Activated CD8-positive, alpha-beta T cell treated with anti-CD3 and anti-CD28 coated beads for 36 hours (primary cell): ENCODE measurements at regions of chr10 and their contacts with region 1.

Region 1: DNA sequence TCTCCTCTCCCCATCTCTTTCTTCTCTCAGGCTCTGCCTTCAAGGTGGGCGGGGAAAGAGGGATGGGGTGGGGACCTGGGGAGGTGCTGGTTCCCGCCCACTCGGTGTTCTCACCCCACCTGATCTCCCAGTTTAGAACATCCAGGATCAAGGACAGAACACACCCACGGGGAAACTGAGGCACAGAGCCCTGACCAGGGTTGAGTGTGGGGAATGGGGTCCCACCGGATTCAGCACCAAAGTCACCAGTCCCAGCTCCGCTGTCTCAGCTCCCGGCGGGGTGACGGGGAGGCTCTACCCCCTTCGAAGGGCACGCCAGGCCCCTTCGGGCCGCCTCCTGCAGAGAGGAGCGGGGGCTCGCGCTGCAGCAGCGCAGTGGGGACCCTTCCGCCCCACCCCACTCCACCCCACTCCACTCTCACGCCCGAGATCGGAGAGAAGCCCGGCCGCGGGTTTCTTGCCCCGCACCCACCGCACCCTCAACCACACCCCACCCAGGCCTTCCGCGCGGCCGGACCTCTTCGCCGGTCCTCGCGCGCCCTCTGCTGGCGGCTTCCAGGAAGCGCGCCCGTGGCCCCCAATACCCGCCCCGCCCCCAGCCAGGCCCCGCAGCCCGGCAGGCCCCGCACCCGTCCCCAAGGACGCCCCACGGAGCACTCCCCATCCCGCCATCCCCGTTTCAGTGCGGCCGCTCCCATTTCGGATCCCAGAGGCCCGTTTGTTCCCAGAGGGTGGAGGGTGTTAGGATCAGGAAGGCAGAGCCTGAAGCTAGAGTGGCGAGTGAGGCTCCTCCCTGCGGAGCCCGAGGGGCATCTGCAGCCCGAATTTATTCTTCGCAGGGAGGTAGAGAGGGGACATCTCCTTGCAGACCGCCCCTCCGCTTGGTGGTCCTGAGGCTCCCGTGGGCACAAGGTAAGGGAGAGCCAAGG is 18.0 kb downstream of the POLL start:
- DNase-seq: peak; percentile 84
- ATAC-seq: peak; percentile 84
- H3K4me3 Mint-ChIP-seq: peak overlapping the region; percentile 72
- H3K27ac Mint-ChIP-seq: no peak overlapping the region
- H3K4me1 Mint-ChIP-seq: peaks cover 16% of the 10 kb centered on the region
- H3K27me3 Mint-ChIP-seq: peaks cover 39% of the 10 kb centered on the region
- CTCF ChIP-seq: peak; percentile 88

Region 2: DNA sequence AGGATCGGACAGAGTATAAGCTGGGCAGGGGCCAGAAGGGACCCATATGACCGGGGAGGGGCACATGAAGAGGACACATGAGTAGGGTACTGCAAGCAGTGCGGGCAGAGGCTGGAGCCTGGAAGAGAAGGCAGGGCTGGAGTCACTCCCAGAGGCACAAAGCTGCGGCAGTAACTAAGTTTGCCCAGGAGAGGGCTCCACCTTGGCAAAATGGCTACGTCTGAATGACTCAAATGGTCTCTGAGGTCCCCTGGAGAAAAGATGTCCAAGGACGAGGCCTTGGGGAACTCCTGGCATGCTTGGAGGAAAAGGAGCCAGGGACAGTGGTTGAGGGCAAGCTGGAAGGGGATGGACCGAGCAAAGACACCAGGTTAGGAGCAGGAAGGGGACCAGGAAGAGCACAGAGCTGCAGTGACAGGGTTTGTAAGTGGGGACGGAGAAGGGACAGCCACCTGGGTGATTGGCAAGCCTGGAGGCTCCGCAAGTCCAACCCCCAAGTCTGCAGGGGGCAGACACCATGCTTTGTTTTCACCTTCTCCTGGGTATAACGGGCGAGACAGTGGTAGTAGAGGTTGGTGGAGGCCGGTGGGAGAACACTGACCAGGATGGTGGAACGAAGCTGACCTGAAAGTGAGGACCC is 297.8 kb before region 1 on chr10:
- CTCF ChIA-PET with region 1: interaction called, 13 read pairs
- POLR2A ChIA-PET with region 1: no interaction called
- intact Hi-C with region 1: no loop called
- DNase-seq: peak; percentile 73
- ATAC-seq: peak; percentile 93
- H3K4me3 Mint-ChIP-seq: no peak overlapping the region
- H3K27ac Mint-ChIP-seq: no peak overlapping the region
- H3K4me1 Mint-ChIP-seq: peaks cover 2% of the 10 kb centered on the region
- H3K27me3 Mint-ChIP-seq: peaks cover 20% of the 10 kb centered on the region
- CTCF ChIP-seq: peak; percentile 80

Region 3: DNA sequence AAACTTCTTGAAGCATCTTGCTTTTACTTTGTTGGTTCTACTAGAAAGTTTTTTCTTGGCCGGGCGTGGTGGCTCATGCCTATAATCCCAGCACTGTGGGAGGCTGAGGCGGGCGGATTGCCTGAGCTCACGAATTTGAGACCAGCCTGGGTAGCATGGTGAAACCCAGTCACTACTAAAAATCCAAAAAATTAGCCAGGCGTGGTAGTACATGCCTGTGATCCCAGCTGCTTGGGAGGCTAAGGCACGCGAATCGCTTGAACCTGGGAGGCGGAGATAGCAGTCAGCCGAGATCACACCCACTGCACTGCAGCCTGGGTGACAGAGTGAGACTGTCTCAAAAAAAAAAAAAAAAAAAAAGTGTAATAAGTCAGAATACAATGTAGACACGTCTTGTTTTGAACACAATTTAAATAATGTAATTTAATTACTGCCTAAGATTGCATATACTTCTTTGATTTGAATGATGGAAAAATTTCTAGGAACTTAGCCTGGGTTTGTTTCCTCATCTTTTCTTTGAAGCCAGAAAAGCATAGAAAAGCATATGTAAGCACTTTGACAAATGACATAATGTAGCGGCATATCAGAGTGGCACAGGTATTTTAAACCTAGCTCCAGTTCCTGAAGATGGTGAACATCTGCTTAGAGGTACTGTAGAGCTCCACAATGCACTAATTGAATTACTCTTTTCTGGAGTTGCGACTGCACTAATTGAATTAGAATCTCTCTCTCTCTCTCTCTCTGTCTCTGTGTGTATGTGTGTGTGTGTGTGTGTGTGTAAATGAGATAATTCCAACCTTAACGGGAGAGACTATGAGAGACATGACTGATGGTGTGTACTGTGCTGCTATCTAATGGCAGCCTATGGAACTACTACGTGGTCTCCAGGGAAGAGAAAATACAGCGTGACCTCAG is 128.3 kb before region 1 on chr10:
- CTCF ChIA-PET with region 1: interaction called, 10 read pairs
- POLR2A ChIA-PET with region 1: no interaction called
- intact Hi-C with region 1: no loop called
- DNase-seq: peak; percentile 41
- ATAC-seq: peak; percentile 94
- H3K4me3 Mint-ChIP-seq: no peak overlapping the region
- H3K27ac Mint-ChIP-seq: no peak overlapping the region
- H3K4me1 Mint-ChIP-seq: peaks cover 3% of the 10 kb centered on the region
- H3K27me3 Mint-ChIP-seq: no peaks in the 10 kb centered on the region
- CTCF ChIP-seq: peak; percentile 75

Region 4: GRCh38 chr10:101536800-101537199 is 33.3 kb before region 1 on chr10:
- CTCF ChIA-PET with region 1: interaction called, 39 read pairs
- POLR2A ChIA-PET with region 1: no interaction called
- intact Hi-C with region 1: no loop called
- DNase-seq: no peak
- ATAC-seq: peak; percentile 66
- H3K4me3 Mint-ChIP-seq: no peak overlapping the region
- H3K27ac Mint-ChIP-seq: no peak overlapping the region
- H3K4me1 Mint-ChIP-seq: no peaks in the 10 kb centered on the region
- H3K27me3 Mint-ChIP-seq: no peaks in the 10 kb centered on the region
- CTCF ChIP-seq: peak; percentile 58

Region 5: GRCh38 chr10:101558202-101558601 is 11.9 kb before region 1 on chr10:
- CTCF ChIA-PET with region 1: interaction called, 13 read pairs
- POLR2A ChIA-PET with region 1: interaction called, 3 read pairs
- intact Hi-C with region 1: no loop called
- DNase-seq: no peak
- ATAC-seq: peak; percentile 50
- H3K4me3 Mint-ChIP-seq: no peak overlapping the region
- H3K27ac Mint-ChIP-seq: no peak overlapping the region
- H3K4me1 Mint-ChIP-seq: peaks cover 9% of the 10 kb centered on the region
- H3K27me3 Mint-ChIP-seq: peaks cover 4% of the 10 kb centered on the region
- CTCF ChIP-seq: no peak

Region 6: DNA sequence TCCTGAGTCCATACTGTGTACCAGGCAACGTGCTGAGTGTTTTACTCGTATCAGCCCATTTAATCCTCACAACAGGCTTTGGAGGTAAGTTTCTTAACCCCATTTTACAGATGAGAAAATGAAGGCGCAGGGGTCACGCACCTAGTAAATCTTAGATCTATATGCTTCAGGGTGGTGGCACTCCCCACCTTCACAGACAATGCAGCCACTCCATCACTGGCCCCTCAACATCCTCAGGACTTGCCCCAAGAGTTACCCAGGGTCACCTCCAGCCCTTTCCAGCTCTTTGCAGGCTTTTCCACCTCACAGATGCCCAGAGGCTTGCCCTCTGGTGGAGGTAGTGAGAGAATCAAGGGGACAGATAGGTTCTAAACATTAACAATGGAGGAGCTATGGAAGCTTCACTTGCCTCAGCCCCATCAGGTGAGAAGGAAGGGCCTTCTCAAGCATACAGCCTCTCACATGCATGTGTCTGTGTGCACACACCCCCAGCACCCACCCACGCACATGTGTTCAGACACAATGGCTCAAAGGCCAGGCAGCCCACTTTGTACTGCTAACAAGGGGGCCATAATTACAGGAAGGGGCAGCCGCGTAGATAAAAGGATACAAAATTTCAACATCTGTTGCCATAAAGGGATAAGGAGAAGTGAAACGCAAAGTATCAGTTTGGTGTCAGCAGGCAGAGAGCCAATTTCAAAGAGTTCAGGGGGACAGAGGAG is 47.2 kb after region 1 on chr10:
- CTCF ChIA-PET with region 1: no interaction called
- POLR2A ChIA-PET with region 1: no interaction called
- intact Hi-C with region 1: no loop called
- DNase-seq: no peak
- ATAC-seq: no peak
- H3K4me3 Mint-ChIP-seq: no peak overlapping the region
- H3K27ac Mint-ChIP-seq: peak overlapping the region; percentile 33
- H3K4me1 Mint-ChIP-seq: no peaks in the 10 kb centered on the region
- H3K27me3 Mint-ChIP-seq: no peaks in the 10 kb centered on the region
- CTCF ChIP-seq: no peak

Region 7: DNA sequence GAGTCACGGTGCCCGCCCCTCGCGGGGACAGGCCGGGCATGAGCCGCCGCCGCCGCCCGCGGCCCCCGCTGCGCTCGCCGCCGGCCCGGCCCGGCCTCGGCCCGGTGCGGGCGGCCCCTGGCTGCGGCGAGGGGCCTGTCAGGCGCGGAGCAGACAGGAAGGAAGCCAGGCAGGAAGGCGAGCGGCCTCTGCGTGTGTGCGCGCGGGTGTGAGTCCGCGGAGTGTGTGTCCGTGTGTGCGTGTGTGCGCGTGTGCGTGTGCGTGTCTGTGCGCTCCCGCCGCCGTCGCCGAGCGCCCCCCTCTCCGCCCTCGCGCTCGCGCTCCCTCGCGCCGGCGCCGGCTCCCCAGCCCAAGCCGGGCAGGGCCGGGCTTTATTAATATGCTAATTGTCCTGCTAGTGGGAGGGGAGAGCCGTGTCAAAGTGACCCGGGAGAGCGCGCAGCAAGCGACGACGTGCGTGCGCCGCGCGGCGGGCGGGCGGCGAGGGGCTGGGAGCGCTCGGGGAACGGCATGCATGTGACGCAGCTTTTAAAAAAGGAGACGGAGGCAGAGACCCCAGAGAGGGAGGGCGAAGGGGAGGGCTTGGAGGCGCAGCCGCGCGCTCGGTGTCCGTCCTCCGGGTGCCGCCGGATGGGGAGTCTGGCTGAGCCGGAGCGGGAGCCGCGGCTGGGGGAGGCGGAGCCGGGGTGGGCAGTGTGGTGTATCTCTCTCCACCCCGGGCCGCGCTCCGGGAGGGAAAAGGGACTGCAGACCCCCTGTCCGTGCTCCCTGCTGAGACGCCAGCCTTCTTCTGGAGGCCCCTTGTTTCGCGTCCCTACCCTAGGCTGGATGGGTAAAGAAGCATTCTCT is 550.3 kb after region 1 on chr10 and contains the start of gene LDB1:
- CTCF ChIA-PET with region 1: no interaction called
- POLR2A ChIA-PET with region 1: no interaction called
- intact Hi-C with region 1: no loop called
- DNase-seq: peak; percentile 72
- ATAC-seq: peak; percentile 35
- H3K4me3 Mint-ChIP-seq: peak within 1 kb of the TSS; percentile 84
- H3K27ac Mint-ChIP-seq: peak within 1 kb of the TSS; percentile 100
- H3K4me1 Mint-ChIP-seq: peaks cover 41% of the 10 kb centered on the region
- H3K27me3 Mint-ChIP-seq: no peaks in the 10 kb centered on the region
- CTCF ChIP-seq: no peak
- total RNA-seq, gene LDB1: 68.5 to 70.9 TPM